Endothelial cell of umbilical vein (primary cell): ENCODE measurements at regions of chr14 and their contacts with region 1.

Region 1: DNA sequence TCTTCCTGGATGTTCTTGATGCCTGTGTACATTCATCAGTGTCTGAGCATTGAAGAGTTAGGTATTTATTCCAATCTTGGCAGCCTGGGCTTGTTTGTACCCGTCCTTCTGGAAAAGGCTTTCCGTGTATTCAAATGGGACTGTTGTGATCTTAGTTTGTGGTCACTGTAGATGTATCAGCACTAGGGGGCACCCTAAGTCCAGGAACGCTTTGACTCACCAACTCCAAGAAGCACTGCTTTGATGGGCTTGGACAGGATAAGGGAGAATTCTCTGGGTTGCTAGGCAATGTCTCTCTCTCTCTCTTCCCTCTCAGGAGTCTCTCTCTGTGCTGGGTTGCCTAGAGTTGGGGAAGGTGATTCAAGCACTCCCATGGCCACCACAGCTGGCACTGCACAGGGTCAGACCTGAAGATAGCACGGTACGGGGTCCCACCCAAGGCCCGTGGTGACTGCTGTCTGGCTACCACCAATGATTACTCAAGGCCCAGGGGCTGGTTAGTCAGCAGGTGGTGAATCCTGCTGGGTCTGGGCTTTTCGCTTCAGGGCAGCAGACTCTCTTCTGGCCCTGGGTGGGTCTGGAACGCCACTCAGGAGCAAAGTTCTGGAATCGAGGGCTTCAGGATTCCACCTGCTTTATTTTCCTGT is 211.1 kb upstream of the RGS6 start:
- DNase-seq: peak; percentile 70
- H3K4me3 ChIP-seq: no peak overlapping the region
- H3K27ac ChIP-seq: no peak overlapping the region
- H3K4me1 ChIP-seq: no peaks in the 10 kb centered on the region
- H3K27me3 ChIP-seq: no peaks in the 10 kb centered on the region
- CTCF ChIP-seq: peak; percentile 70 to 72
- POLR2A ChIP-seq: no peak

Region 2: DNA sequence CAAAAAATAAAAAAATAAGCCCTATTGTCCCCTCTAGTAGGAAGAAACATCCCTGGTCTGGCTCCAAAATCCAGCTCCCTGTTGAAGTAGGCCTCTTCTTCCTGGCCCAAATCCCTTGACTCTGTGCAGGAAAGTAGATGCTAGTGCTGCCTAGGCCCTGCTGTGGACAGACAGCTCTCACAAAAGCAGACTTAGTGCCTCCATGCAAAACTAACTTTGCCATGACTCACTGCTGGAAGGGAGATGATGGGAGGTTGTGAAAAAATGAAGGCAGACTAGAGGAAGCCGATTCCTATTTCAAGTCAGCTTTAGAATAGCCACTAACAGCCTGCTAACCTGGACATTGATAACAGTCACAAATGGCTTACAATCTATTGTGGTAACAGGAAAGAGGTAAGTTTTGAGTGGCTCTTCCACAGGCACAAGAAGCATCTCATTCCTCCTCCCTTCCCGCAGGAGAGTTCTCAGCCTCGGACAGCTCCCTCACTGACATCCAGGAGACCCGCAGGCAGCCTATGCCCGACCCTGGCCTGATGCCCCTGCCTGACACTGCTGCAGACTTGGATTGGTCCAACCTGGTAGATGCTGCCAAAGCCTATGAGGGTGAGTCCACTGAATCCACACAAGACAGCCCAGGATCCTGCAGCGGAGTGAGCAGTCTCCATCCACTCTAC is 12.2 kb after region 1 on chr14:
- CTCF ChIA-PET with region 1: interaction called, 15 read pairs
- POLR2A ChIA-PET with region 1: no interaction called
- dilution Hi-C with region 1: no loop called
- intact Hi-C with region 1: no loop called
- DNase-seq: no peak
- H3K4me3 ChIP-seq: no peak overlapping the region
- H3K27ac ChIP-seq: no peak overlapping the region
- H3K4me1 ChIP-seq: no peaks in the 10 kb centered on the region
- H3K27me3 ChIP-seq: no peaks in the 10 kb centered on the region
- CTCF ChIP-seq: no peak
- POLR2A ChIP-seq: no peak

Region 3: DNA sequence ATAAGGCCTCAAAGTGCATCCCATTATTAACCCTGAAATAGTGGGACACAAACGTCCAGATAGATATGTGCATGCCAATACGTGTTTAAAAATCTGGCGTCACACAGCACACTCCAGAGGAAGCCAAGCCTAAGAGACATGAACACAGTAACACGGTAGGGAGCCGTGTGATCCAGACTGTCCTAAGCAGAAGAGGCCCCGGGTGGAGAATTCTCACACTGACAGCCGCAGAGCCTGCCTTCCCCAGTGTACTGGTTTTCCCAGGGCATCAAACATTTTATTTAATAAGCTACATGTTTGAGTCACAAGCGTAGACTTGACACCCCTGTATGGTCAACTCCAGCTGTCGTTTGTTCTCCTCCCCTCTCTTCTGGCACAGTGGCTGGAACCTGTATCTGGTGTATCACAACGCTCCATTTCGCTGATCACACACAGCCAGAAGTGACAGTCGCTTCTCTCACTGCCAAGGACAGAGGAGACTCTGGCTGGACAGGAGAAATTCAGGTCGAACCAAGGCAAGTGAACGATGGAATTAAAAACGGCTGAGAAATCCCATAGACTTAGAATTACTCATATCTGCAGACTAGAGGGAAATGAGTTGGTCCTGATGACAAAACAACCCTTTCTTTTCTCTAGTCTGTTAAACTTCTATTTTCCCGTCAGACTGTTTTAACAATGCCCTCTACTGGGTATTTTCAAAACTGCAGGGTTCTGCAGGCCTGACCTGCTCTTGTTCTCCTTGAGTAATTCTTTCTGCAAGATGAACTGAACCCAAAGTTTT is 571.0 kb after region 1 on chr14:
- CTCF ChIA-PET with region 1: no interaction called
- POLR2A ChIA-PET with region 1: no interaction called
- dilution Hi-C with region 1: no loop called
- intact Hi-C with region 1: loop called (anchors 2 kb)
- DNase-seq: peak; percentile 5
- H3K4me3 ChIP-seq: no peak overlapping the region
- H3K27ac ChIP-seq: no peak overlapping the region
- H3K4me1 ChIP-seq: no peaks in the 10 kb centered on the region
- H3K27me3 ChIP-seq: no peaks in the 10 kb centered on the region
- CTCF ChIP-seq: peak; percentile 23 to 29
- POLR2A ChIP-seq: no peak

Region 4: GRCh38 chr14:72420725-72421474 is 699.8 kb after region 1 on chr14:
- CTCF ChIA-PET with region 1: interaction called, 13 read pairs
- POLR2A ChIA-PET with region 1: no interaction called
- dilution Hi-C with region 1: no loop called
- intact Hi-C with region 1: no loop called
- DNase-seq: peak; percentile 65
- H3K4me3 ChIP-seq: no peak overlapping the region
- H3K27ac ChIP-seq: no peak overlapping the region
- H3K4me1 ChIP-seq: no peaks in the 10 kb centered on the region
- H3K27me3 ChIP-seq: no peaks in the 10 kb centered on the region
- CTCF ChIP-seq: peak; percentile 79 to 92
- POLR2A ChIP-seq: no peak